H1 (cell line): ENCODE measurements at regions of chr21 and their contacts with region 1.

Region 1: GRCh38 chr21:38683226-38683625 is 122.5 kb upstream of the ETS2 start:
- DNase-seq: no peak
- H3K4me3 ChIP-seq: no peak overlapping the region
- H3K27ac ChIP-seq: no peak overlapping the region
- H3K4me1 ChIP-seq: no peaks in the 10 kb centered on the region
- H3K27me3 ChIP-seq: no peaks in the 10 kb centered on the region
- CTCF ChIP-seq: no peak
- EP300 ChIP-seq: no peak
- POLR2A ChIP-seq: no peak
- RAD21 ChIP-seq: no peak

Region 2: DNA sequence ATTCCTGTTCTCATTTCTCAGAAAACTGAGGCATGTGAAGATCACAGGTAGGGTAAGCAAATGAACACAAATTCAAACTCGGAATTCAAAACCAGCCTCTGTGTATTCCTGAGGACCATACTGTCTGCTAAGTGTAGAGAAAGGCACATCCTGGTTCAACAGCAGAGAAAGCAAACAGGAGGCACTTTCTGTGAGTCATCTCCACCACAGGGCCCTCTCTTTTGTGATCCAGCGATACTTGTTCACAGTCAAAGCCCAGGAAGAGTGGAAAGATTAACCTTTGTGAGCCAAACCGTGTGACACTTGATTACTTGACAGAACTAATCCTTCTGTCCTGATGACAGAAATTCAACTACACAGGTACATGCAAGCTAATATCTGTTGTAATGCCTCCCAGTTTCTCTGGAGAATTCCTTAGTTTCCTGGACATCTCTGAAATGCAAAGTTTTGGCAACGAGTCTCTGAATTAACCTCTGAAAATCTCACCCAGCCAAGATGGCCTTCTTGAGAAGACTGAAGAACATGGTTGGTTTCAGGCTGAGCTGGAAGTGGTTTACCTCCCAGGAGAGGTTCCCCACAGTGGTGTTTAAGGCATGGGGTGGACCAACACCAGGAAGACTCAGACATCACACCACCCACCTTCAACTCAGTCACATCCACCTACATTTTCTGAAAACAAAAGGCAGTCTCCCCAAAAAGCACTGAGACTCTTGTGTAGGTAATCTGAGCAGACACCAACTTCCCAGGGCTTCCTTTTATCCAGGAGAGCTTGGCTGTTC is 86.8 kb before region 1 on chr21:
- CTCF ChIA-PET with region 1: no interaction called
- POLR2A ChIA-PET with region 1: no interaction called
- DNase-seq: no peak
- H3K4me3 ChIP-seq: no peak overlapping the region
- H3K27ac ChIP-seq: no peak overlapping the region
- H3K4me1 ChIP-seq: peaks cover 0 to 5% (median under 1%) of the 10 kb centered on the region in 4 experiments; a peak in 4 of 7 replicates
- H3K27me3 ChIP-seq: no peaks in the 10 kb centered on the region; a peak in 1 of 7 replicates
- CTCF ChIP-seq: no peak
- EP300 ChIP-seq: no peak
- POLR2A ChIP-seq: no peak
- RAD21 ChIP-seq: no peak

Region 3: GRCh38 chr21:38669176-38669575 is 14.1 kb before region 1 on chr21:
- CTCF ChIA-PET with region 1: interaction called, 11 read pairs
- POLR2A ChIA-PET with region 1: no interaction called
- DNase-seq: no peak
- H3K4me3 ChIP-seq: no peak overlapping the region
- H3K27ac ChIP-seq: no peak overlapping the region
- H3K4me1 ChIP-seq: peaks cover 1 to 4% (median 2%) of the 10 kb centered on the region in 4 experiments; a peak in 6 of 7 replicates
- H3K27me3 ChIP-seq: no peaks in the 10 kb centered on the region
- CTCF ChIP-seq: peak in 2 of 3 experiments; percentile 43 to 62; a peak in 3 of 4 replicates
- EP300 ChIP-seq: no peak
- POLR2A ChIP-seq: no peak
- RAD21 ChIP-seq: peak; percentile 44 to 52

Region 4: DNA sequence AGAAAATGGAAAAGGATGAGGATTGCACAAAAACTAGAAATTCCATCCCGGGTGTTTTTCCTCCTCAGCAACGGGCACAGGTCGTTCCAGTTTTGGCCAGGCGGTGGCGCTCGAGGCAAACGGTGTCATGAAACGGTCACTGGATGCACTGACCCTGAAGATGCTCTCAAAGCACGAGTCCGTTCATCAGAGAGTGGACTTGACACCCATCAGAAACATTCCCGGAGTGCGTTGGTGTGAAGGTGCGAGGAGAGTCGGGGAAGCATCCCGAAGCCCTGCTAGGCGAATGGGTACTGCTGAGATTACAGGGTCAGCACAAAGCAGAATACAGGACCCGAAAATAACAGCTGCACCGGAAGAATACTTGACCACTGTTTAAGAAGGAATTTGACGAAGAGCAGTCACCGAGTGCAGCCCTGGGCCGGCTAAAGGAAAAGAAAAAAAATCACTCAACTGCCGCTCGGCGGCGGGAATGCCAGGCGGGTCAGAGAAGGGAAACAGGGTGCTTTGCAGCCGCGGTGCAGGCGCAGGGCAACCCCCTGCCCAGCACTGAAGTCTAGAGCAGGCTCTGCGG is 50.8 kb after region 1 on chr21:
- CTCF ChIA-PET with region 1: no interaction called
- POLR2A ChIA-PET with region 1: no interaction called
- DNase-seq: peak; percentile 54 to 100
- H3K4me3 ChIP-seq: peak overlapping the region in 3 of 4 experiments; percentile 26 to 48 (median 48); a peak in 6 of 8 replicates
- H3K27ac ChIP-seq: peak overlapping the region; percentile 48
- H3K4me1 ChIP-seq: peaks cover 0 to 2% (median 0%) of the 10 kb centered on the region in 4 experiments; a peak in 1 of 7 replicates
- H3K27me3 ChIP-seq: no peaks in the 10 kb centered on the region
- CTCF ChIP-seq: peak; percentile 87 to 93 (median 87)
- EP300 ChIP-seq: no peak
- POLR2A ChIP-seq: no peak
- RAD21 ChIP-seq: peak; percentile 93 to 94